ENCODE measurements at regions of chr15 and their contacts with region 1.

Region 1: DNA sequence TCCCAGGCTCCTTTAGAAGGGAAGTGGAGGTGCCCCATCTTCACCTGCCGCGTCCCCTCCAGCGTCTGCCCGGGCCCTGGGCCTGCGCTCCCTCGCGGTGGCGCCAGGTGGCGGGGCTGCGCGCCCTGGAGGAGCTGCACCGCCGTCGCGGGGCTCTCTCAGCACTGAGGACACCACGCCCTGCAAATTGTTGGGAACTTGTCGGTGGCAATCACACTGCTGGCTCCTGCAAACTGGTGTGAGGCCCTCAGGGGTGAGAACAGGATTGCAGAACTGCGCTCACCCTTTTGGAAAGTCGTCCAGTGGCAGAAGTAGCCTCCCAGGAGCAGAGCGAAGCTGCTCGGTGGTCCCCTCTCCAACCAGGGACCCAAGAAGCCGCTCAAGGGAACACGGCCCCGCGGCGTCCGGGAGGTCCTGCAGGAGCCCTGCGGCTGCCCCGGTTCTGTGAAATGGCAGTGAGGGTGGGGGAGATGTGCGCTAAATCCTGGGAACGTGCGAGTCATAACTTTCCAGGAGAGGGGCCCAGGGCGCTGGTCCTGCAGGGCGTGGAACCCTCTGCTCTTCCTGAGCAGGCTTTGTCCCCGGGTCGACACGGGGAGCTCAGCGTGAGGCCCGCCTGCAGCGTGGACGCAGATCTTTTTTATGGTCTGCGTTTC is 995 bp upstream of the LRRK1 start:
- DNase-seq: peak; percentile 88
- ATAC-seq: peak; percentile 88
- H3K4me3 Mint-ChIP-seq: peak overlapping the region; percentile 66
- H3K27ac Mint-ChIP-seq: no peak overlapping the region
- H3K4me1 Mint-ChIP-seq: peaks cover 18% of the 10 kb centered on the region
- H3K27me3 Mint-ChIP-seq: peaks cover 58% of the 10 kb centered on the region
- CTCF ChIP-seq: peak; percentile 85

Region 2: GRCh38 chr15:100879464-100880138 is 38.6 kb before region 1 on chr15 and contains the start of gene ALDH1A3:
- CTCF ChIA-PET with region 1: interaction called, 10 read pairs
- POLR2A ChIA-PET with region 1: interaction called, 3 read pairs
- DNase-seq: peak; percentile 48
- ATAC-seq: peak; percentile 11
- H3K4me3 Mint-ChIP-seq: peak within 1 kb of the TSS; percentile 89
- H3K27ac Mint-ChIP-seq: no peak within 1 kb of the TSS
- H3K4me1 Mint-ChIP-seq: peaks cover 30% of the 10 kb centered on the region
- H3K27me3 Mint-ChIP-seq: peaks cover 83% of the 10 kb centered on the region
- CTCF ChIP-seq: no peak
- total RNA-seq, gene ALDH1A3: 9.9 to 14.0 TPM (median 10.7 TPM) in 3 replicates

Region 3: DNA sequence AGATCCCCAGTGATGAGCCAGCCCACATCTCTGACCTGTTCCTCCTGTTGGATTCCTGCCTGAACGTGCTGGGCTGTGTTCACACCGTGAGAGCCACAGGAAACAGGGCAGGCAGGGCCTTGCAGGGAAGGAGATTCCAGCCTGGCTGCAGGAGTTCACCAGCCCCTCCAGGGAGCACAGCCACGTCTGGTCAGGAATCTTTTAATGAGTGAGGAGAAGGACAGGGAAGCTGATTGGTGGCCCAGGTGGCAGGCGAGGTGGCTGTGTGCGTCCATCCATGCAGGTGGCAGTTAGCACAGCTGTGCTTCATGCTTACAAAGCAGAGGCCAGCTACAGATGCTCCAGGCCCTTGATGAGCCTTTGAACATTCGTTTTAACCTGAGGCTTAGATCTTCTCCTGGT is 11.5 kb after region 1 on chr15:
- CTCF ChIA-PET with region 1: interaction called, 23 read pairs
- POLR2A ChIA-PET with region 1: no interaction called
- DNase-seq: no peak
- ATAC-seq: peak; percentile 17
- H3K4me3 Mint-ChIP-seq: no peak overlapping the region
- H3K27ac Mint-ChIP-seq: no peak overlapping the region; the same call in 1 of the 2 replicates
- H3K4me1 Mint-ChIP-seq: peaks cover 26% of the 10 kb centered on the region
- H3K27me3 Mint-ChIP-seq: no peaks in the 10 kb centered on the region
- CTCF ChIP-seq: no peak

Region 4: GRCh38 chr15:100947760-100948429 is 29.7 kb after region 1 on chr15:
- CTCF ChIA-PET with region 1: interaction called, 14 read pairs
- POLR2A ChIA-PET with region 1: no interaction called
- DNase-seq: peak; percentile 36
- ATAC-seq: peak; percentile 72
- H3K4me3 Mint-ChIP-seq: no peak overlapping the region
- H3K27ac Mint-ChIP-seq: peak overlapping the region; percentile 55
- H3K4me1 Mint-ChIP-seq: peaks cover 14% of the 10 kb centered on the region
- H3K27me3 Mint-ChIP-seq: no peaks in the 10 kb centered on the region
- CTCF ChIP-seq: no peak

Measured in WTC11 (cell line).